ENCODE measurements at regions of chr5 and their contacts with region 1.

Region 1: DNA sequence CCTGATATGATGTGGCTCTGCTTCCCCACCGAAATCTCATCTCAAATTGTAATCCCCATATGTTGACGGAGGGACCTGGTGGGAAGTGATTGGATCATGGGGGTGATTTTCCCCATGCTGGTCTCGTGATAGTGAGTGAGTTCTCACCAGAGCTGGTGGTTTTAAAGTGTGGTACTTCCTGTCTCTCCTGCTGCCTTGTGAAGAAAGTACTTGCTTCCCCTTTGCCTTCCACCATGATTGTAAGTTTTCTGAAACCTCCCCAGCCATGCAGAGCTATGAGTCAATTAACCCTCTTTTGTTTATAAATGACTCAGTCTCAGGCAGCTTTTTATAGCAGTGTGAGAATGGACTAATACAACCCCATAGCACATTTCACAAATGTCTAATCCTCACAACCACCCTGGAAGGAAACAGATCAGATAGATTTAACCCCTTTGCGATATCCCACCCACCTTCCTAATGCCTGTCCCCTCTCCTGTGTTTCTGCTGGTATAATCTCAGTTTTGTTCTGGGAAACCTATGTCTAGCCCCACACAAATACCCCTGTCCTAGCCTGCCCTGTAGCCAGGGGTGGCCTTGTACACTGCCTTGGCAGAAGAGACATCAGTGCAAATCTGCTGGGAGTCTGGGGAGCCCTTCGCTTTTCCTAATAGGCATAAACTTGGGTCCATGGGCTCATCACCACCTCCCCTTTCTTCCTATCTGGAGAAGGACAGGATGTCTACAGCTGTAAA is 157.0 kb upstream of the RAI14 start:
- DNase-seq: no peak
- H3K4me3 ChIP-seq: no peak overlapping the region
- H3K27ac ChIP-seq: peak overlapping the region in 4 of 5 donors; percentile 54 to 70 (median 61)
- H3K4me1 ChIP-seq: peaks cover 19 to 56% (median 41%) of the 10 kb centered on the region in 4 donors
- H3K27me3 ChIP-seq: no peaks in the 10 kb centered on the region
- CTCF ChIP-seq: no peak
- EP300 ChIP-seq: no peak
- POLR2A ChIP-seq: no peak

Region 2: GRCh38 chr5:34838785-34839714 is 339.9 kb after region 1 on chr5 and contains the start of gene TTC23L:
- intact Hi-C with region 1: loop called (anchors 10 kb)
- DNase-seq: peak; percentile 91 to 96
- H3K4me3 ChIP-seq: peak within 1 kb of the TSS; percentile 63 to 80 (median 71)
- H3K27ac ChIP-seq: peak within 1 kb of the TSS; percentile 64 to 83 (median 76)
- H3K4me1 ChIP-seq: peaks cover 0 to 13% (median 9%) of the 10 kb centered on the region in 4 donors
- H3K27me3 ChIP-seq: no peaks in the 10 kb centered on the region
- CTCF ChIP-seq: no peak
- EP300 ChIP-seq: no peak
- POLR2A ChIP-seq: peak in 1 of 4 donors; percentile 66
- total RNA-seq, gene TTC23L: 0.89 to 1.5 TPM in 2 of 5 donors, not detected in the others

Measured in stomach (tissue), 19 donors.